ENCODE measurements at regions of chr6 and their contacts with region 1.

Region 1: DNA sequence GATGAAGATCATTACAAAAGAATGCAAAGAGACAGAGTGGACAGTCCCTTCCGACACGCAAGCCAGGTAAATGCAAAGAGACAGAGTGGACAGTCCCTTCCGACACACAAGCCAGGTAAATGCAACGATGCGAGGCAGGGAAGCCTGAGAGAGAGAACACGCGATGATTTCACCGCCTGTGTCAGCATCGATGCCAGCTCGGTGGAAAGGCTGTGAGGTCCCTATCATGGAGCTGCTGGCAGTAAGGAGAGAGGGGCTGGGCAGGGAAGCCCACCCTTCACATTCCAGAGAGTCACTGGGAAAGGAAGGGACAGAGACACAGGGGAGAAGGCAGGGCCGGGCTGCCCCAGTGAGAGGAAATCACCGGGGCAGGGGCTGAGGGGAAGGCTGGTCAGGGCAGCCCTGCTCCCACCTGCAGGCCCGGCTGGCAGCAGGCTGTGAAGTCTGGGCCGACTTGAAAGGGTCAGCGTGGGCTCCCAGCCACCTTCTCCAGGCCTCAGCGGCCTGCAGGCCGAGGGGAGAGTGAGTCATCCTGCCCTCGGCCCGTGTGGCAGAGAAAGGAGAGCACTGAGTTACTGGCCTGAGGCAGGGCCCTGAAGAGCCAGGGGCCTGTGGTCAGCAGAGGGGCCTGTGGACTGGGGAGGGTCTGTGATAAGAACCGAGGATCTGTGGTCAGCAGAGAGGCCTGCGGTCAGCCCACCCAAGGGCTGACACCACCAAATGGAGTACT is 80.4 kb downstream of the DACT2 start:
- DNase-seq: no peak
- H3K4me3 Mint-ChIP-seq: no peak overlapping the region
- H3K27ac Mint-ChIP-seq: peak overlapping the region; percentile 52
- H3K4me1 Mint-ChIP-seq: peaks cover 21% of the 10 kb centered on the region
- H3K27me3 Mint-ChIP-seq: no peaks in the 10 kb centered on the region

Region 2: DNA sequence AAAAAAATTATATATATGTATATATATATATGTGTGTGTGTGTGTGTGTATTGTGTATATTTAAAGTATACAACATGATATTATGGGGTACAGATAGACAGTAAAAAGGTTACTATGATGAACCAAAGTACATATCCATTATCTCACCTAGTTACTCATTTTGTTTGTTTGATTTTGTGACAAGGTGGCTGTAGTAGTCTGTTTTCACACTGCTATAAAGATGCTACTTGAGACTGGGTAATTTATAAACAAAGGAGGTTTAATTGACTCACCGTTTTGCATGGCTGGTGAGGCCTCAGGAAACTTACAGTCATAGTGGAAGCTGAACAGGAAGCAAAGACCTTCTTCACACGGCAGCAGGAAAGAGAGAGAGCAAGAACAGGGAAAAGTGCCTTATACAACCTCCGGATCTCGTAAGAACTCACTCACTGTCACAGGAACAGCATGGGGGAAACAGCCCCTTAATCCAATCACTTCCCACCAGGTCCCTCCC is 110.6 kb after region 1 on chr6:
- intact Hi-C with region 1: loop called (anchors 2 kb)
- DNase-seq: no peak
- H3K4me3 Mint-ChIP-seq: no peak overlapping the region
- H3K27ac Mint-ChIP-seq: peak overlapping the region; percentile 82
- H3K4me1 Mint-ChIP-seq: peaks cover 17% of the 10 kb centered on the region
- H3K27me3 Mint-ChIP-seq: peaks cover 7% of the 10 kb centered on the region

Region 3: GRCh38 chr6:168815229-168815628 is 576.0 kb after region 1 on chr6:
- intact Hi-C with region 1: no loop called
- DNase-seq: no peak
- H3K4me3 Mint-ChIP-seq: no peak overlapping the region
- H3K27ac Mint-ChIP-seq: no peak overlapping the region
- H3K4me1 Mint-ChIP-seq: no peaks in the 10 kb centered on the region
- H3K27me3 Mint-ChIP-seq: peaks cover 6% of the 10 kb centered on the region